Dendritic cell treated with granulocyte-macrophage colony-stimulating factor and Interleukin-4, amounts not matched to agents 40 ng/mL and 50 ng/mL, for 4 days (primary cell): ENCODE measurements at regions of chr6 and their contacts with region 1.

Region 1: DNA sequence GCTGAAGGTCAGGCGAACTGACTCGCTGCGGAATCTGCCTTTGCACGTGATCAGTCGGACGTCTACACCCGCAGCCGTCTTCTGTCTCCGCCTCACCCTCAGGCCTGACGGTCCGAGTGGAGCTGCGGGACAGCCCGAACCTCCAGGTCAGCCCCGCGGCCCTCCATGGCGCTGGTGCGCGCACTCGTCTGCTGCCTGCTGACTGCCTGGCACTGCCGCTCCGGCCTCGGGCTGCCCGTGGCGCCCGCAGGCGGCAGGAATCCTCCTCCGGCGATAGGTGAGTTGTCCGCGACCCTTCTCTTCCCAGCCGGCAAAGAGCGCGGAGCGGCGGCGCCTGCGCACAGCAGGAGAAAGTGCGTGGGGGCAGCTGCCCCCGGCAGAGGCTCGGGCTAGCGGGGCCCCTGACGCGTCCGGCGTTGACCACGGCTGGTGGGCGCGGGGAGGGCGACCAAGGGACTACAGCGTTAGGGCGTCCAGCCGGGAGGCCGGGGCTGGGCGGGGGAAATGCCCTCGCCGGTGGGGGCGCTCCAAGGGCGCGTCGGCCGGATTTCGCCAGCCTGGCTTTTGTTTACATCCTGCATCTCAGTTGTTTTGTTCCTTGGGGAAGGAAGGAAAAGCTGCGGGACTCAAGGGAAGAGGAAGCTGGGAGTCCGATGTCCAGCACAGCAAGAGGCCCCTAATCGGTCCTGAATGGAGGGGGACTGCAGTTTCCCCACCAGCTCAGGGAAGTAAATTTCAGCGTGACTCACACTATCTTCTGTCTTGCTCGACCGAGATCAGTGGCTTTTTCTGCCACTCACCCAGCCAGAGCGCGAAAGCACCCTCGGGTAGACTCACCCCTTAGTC is at the start of gene SMPDL3A:
- H3K4me3 Mint-ChIP-seq: peak within 1 kb of the TSS; percentile 79
- H3K27ac Mint-ChIP-seq: peak within 1 kb of the TSS; percentile 86
- H3K4me1 Mint-ChIP-seq: peaks cover 34% of the 10 kb centered on the region
- H3K27me3 Mint-ChIP-seq: peaks cover 11% of the 10 kb centered on the region

Region 2: DNA sequence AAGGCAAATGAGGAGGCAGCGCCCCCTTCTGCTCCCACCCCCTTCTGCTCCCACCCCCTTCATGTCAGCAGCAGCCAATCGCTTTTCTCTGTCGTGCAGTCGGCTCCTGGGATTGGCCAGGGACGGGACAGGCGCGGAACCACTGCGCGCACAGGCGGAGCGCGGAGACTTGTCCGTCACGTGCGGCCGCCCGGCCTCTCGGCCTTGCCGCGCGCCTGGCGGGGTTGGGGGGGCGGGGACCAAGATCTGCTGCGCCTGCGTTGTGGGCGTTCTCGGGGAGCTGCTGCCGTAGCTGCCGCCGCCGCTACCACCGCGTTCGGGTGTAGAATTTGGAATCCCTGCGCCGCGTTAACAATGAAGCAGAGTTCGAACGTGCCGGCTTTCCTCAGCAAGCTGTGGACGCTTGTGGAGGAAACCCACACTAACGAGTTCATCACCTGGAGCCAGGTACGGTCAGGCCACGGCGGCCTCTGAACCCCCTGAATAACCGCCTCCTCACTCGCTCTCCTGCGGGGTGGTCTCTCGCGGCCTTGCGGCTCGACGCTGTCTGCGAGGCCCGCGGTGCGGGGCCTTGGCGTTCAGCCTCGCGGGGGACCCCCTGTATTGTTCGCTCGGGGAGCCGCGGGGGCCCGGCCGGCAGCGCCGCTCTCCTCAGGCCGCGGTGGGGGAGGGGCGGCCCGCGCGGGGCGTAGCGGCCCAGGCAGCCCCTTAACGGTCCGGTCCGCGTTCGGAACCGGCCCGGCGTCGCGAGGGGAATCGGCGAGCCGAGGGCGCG is 389.8 kb before region 1 on chr6 and contains the start of gene HSF2:
- intact Hi-C with region 1: loop called (anchors 10 kb)
- H3K4me3 Mint-ChIP-seq: peak within 1 kb of the TSS; percentile 97
- H3K27ac Mint-ChIP-seq: peak within 1 kb of the TSS; percentile 88
- H3K4me1 Mint-ChIP-seq: peaks cover 13% of the 10 kb centered on the region
- H3K27me3 Mint-ChIP-seq: no peaks in the 10 kb centered on the region

Region 3: GRCh38 chr6:122758927-122759334 is 30.5 kb before region 1 on chr6:
- intact Hi-C with region 1: loop called (anchors 5 kb)
- H3K4me3 Mint-ChIP-seq: no peak overlapping the region
- H3K27ac Mint-ChIP-seq: no peak overlapping the region
- H3K4me1 Mint-ChIP-seq: peaks cover 30% of the 10 kb centered on the region
- H3K27me3 Mint-ChIP-seq: no peaks in the 10 kb centered on the region